Gastrocnemius medialis (tissue), 4 donors: ENCODE measurements at regions of chr2 and their contacts with region 1.

Region 1: GRCh38 chr2:71452565-71452964 is 796 bp upstream of the DYSF start:
- DNase-seq: peak; percentile 87 to 96
- ATAC-seq: peak; percentile 59 to 67
- H3K4me3 ChIP-seq: peak overlapping the region; percentile 62 to 83 (median 74)
- H3K27ac ChIP-seq: peak overlapping the region; percentile 92 to 99 (median 94)
- H3K4me1 ChIP-seq: peaks cover 66 to 70% of the 10 kb centered on the region in 2 donors
- H3K27me3 ChIP-seq: no peaks in the 10 kb centered on the region
- CTCF ChIP-seq: peak in 4 of 5 experiments; percentile 32 to 56 (median 48)
- POLR2A ChIP-seq: peak in 1 of 2 donors; percentile 23

Region 2: DNA sequence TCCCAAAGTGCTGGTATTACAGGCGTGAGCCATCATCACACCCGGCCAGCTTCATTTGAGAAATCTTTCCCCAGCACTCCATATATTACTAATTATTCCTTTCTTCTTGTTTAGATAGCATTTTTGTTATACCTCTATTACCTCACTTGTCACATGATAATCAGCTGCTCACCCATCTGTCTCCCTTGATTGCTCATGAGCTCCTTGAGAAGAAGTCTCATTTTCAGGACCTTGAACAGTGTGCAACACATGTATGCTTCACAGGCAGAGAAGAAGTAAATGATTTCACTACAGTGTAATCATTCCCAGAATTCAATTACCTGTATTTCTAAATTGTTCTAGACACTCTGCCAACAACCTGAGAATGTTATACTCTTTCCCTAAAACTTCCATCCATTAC is 231.8 kb before region 1 on chr2:
- in situ Hi-C with region 1: no loop called
- intact Hi-C with region 1: no loop called
- DNase-seq: no peak
- ATAC-seq: no peak
- H3K4me3 ChIP-seq: no peak overlapping the region
- H3K27ac ChIP-seq: no peak overlapping the region
- H3K4me1 ChIP-seq: peaks cover 10 to 15% of the 10 kb centered on the region in 2 donors
- H3K27me3 ChIP-seq: no peaks in the 10 kb centered on the region
- CTCF ChIP-seq: no peak
- POLR2A ChIP-seq: no peak

Region 3: GRCh38 chr2:71276311-71277146 is 176.0 kb before region 1 on chr2:
- in situ Hi-C with region 1: no loop called
- intact Hi-C with region 1: loop called (anchors 5 kb)
- DNase-seq: peak; percentile 84 to 90
- ATAC-seq: peak; percentile 73
- H3K4me3 ChIP-seq: peak overlapping the region; percentile 67 to 80 (median 72)
- H3K27ac ChIP-seq: peak overlapping the region; percentile 90 to 96 (median 94)
- H3K4me1 ChIP-seq: peaks cover 28 to 33% of the 10 kb centered on the region in 2 donors
- H3K27me3 ChIP-seq: no peaks in the 10 kb centered on the region
- CTCF ChIP-seq: peak in 2 of 5 experiments; percentile 11 to 20
- POLR2A ChIP-seq: peak; percentile 96 to 99

Region 4: DNA sequence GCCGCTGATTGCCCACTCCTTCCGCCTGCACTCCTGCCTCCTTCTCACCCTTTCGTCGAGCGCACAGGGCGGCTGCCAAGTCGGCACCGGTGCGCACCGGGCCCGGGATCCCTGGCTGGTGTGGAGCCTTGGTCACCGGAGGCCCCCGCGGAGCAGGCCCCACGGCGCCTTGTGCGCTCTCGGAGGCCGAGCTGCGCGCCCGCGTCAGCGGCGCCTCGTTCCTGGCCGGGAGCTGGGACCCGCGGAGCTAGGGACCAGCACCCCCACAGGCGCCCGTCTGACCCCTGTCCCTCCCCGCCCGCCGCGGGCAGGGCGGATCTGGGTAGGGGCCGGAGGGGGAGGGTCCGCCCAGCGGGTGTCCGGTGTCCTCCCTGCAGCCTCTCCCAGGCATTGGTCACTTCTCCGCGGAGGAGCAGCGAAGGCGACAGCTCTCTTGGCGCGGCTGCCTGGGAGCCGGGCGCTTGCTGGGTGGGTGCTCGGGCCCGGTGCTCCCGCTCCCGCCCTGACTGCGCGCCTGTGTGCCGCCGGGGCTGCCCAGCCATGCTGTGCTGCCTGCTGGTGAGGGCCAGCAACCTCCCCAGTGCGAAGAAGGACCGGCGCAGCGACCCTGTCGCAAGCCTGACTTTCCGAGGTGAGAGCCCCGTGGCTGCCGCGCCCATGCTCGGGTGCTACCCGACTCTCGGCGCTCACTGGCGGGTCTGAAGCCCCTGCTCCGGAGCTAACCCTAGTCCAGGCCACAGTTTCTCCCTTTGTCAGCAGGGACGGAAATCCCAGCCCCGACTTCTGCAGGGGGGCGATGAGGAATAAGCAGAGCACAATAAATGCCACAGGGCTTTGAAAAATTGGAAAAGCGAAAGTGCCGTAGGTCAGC is 14.0 kb after region 1 on chr2:
- in situ Hi-C with region 1: no loop called
- intact Hi-C with region 1: loop called (anchors 2 kb)
- DNase-seq: peak; percentile 65 to 82
- ATAC-seq: peak; percentile 67 to 72
- H3K4me3 ChIP-seq: peak overlapping the region; percentile 68 to 88 (median 72)
- H3K27ac ChIP-seq: peak overlapping the region; percentile 77 to 99 (median 86)
- H3K4me1 ChIP-seq: peaks cover 68 to 79% of the 10 kb centered on the region in 2 donors
- H3K27me3 ChIP-seq: no peaks in the 10 kb centered on the region
- CTCF ChIP-seq: no peak
- POLR2A ChIP-seq: peak; percentile 52 to 65

Region 5: DNA sequence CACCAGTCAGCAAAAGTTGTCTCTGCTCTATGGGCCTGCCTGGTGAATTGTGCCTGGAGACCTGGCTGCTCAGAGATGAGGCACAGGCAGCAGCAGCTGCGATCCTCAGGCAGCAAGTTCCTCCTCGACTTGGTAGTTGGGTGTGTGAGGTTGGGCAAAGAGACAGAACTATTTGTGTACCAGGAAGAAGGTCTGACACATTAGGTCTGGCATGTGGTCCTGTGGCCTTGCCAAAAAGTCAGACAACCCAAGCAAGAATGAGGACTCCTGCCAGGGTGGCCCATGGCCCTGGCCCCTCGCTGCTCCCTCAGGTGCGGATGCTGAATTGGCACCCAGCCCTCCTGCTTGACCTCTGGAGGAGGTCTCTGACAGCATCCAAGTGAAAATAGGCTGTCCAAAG is 193.5 kb after region 1 on chr2:
- in situ Hi-C with region 1: no loop called
- intact Hi-C with region 1: no loop called
- DNase-seq: peak; percentile 89 to 94
- ATAC-seq: peak; percentile 100
- H3K4me3 ChIP-seq: no peak overlapping the region
- H3K27ac ChIP-seq: peak overlapping the region; percentile 78 to 91 (median 82)
- H3K4me1 ChIP-seq: peaks cover 16 to 18% of the 10 kb centered on the region in 2 donors
- H3K27me3 ChIP-seq: no peaks in the 10 kb centered on the region
- CTCF ChIP-seq: no peak
- POLR2A ChIP-seq: peak; percentile 28 to 33

Region 6: DNA sequence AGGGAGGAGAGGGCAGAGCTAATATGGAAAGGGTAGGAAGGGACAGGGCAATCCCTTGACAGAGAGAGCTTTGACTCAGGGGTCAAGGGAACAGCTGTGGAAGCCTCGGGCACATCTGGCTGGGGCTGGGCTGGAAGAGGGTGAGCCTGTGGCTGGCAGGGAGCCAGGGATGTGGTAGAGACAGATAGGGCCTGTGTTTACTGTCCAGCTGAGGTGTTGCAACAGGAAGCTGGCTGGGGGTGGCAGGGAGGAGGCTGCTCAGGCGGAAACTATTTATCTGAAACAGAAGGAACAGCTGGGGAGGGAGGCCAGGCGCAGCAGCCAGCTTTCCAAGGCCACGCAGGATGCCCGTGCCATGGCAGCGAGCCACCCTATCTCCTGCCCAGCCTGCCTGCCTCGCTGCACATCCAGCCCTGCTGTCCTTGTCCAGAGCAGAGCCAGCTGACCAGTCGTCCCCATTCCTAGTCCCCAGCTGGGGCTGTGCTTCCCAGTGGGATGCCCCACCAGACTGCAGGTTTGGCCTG is 430.4 kb after region 1 on chr2:
- in situ Hi-C with region 1: no loop called
- intact Hi-C with region 1: loop called (anchors 2 kb)
- DNase-seq: peak; percentile 96 to 99
- ATAC-seq: peak; percentile 70 to 80
- H3K4me3 ChIP-seq: no peak overlapping the region
- H3K27ac ChIP-seq: peak overlapping the region; percentile 79 to 90 (median 86)
- H3K4me1 ChIP-seq: peaks cover 45 to 47% of the 10 kb centered on the region in 2 donors
- H3K27me3 ChIP-seq: no peaks in the 10 kb centered on the region
- CTCF ChIP-seq: no peak
- POLR2A ChIP-seq: no peak